PC-3 (cell line): ENCODE measurements at regions of chr6 and their contacts with region 1.

Region 1: DNA sequence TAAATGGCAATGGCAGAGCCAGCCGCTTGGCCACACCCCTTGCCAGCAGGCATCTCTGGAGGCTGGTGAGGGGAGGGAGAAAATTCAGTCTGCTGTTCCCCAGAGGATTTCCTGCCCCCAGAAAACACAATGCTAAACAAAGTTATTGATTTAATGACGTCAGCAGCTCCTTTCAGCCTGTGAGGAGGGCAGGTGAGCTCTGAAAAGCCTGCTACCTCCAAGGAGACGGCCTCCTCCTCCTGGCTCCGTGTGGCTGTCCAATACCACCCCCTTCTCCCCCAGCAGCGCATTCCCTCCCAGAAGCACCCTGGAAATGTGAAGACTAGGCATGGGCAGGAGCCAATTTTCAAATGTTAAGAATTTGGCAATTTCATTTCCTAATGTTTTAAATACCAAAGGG is 393.1 kb downstream of the ZFAND3 start:
- DNase-seq: no peak
- ATAC-seq: no peak
- H3K4me3 ChIP-seq: no peak overlapping the region
- H3K27ac ChIP-seq: no peak overlapping the region
- H3K4me1 ChIP-seq: peaks cover 23% of the 10 kb centered on the region
- H3K27me3 ChIP-seq: no peaks in the 10 kb centered on the region
- CTCF ChIP-seq: no peak

Region 2: GRCh38 chr6:38273325-38273724 is 60.7 kb after region 1 on chr6:
- CTCF ChIA-PET with region 1: no interaction called
- POLR2A ChIA-PET with region 1: no interaction called
- intact Hi-C with region 1: loop called (anchors 2 kb)
- DNase-seq: no peak
- ATAC-seq: no peak
- H3K4me3 ChIP-seq: no peak overlapping the region
- H3K27ac ChIP-seq: no peak overlapping the region
- H3K4me1 ChIP-seq: peaks cover 37% of the 10 kb centered on the region
- H3K27me3 ChIP-seq: no peaks in the 10 kb centered on the region
- CTCF ChIP-seq: no peak